Mammary epithelial cell (primary cell): ENCODE measurements at regions of chr16 and their contacts with region 1.

Region 1: GRCh38 chr16:24681809-24682511 is 47.5 kb upstream of the TNRC6A start:
- DNase-seq: peak; percentile 83
- H3K4me3 ChIP-seq: no peak overlapping the region
- H3K27ac ChIP-seq: peak overlapping the region; percentile 98
- H3K4me1 ChIP-seq: peaks cover 26% of the 10 kb centered on the region
- H3K27me3 ChIP-seq: no peaks in the 10 kb centered on the region
- CTCF ChIP-seq: no peak

Region 2: GRCh38 chr16:24645739-24646645 is 36.0 kb before region 1 on chr16:
- CTCF ChIA-PET with region 1: no interaction called
- dilution Hi-C with region 1: no loop called
- in situ Hi-C with region 1: no loop called
- intact Hi-C with region 1: loop called (anchors 1 kb)
- DNase-seq: peak; percentile 98
- H3K4me3 ChIP-seq: no peak overlapping the region
- H3K27ac ChIP-seq: peak overlapping the region; percentile 91
- H3K4me1 ChIP-seq: peaks cover 17% of the 10 kb centered on the region
- H3K27me3 ChIP-seq: no peaks in the 10 kb centered on the region
- CTCF ChIP-seq: no peak

Region 3: GRCh38 chr16:24700549-24701392 is 18.8 kb after region 1 on chr16:
- CTCF ChIA-PET with region 1: interaction called, 13 read pairs
- dilution Hi-C with region 1: no loop called
- in situ Hi-C with region 1: no loop called
- intact Hi-C with region 1: no loop called
- DNase-seq: peak; percentile 85
- H3K4me3 ChIP-seq: no peak overlapping the region
- H3K27ac ChIP-seq: peak overlapping the region; percentile 14
- H3K4me1 ChIP-seq: peaks cover 16% of the 10 kb centered on the region
- H3K27me3 ChIP-seq: no peaks in the 10 kb centered on the region
- CTCF ChIP-seq: peak; percentile 22 to 50

Region 4: DNA sequence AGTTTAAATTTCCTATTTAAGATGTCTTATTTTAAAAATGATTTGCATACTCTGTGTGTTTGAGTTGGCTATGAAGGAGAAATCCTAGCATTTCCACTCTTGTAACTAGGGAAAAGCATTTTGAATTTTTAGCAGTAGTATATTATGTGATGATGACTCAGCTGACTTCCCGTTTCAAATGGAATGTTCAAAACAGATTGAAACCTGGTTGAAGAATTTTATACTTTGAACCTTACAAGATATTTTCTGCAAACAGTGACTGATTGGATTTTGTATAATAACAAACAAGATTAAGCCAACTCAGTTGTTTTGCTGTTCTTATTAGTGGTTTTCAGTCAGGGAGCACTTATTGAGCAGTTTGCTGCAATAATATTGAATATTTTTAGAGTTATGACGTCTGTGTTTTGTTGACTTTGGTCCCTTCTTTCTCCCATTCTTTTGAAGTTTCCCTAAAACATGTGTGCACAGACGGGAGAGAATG is 55.5 kb after region 1 on chr16:
- CTCF ChIA-PET with region 1: no interaction called
- dilution Hi-C with region 1: no loop called
- in situ Hi-C with region 1: no loop called
- intact Hi-C with region 1: no loop called
- DNase-seq: no peak
- H3K4me3 ChIP-seq: peak overlapping the region in 1 of 3 experiments; percentile 23
- H3K27ac ChIP-seq: peak overlapping the region; percentile 38
- H3K4me1 ChIP-seq: peaks cover 27% of the 10 kb centered on the region
- H3K27me3 ChIP-seq: no peaks in the 10 kb centered on the region
- CTCF ChIP-seq: no peak

Region 5: DNA sequence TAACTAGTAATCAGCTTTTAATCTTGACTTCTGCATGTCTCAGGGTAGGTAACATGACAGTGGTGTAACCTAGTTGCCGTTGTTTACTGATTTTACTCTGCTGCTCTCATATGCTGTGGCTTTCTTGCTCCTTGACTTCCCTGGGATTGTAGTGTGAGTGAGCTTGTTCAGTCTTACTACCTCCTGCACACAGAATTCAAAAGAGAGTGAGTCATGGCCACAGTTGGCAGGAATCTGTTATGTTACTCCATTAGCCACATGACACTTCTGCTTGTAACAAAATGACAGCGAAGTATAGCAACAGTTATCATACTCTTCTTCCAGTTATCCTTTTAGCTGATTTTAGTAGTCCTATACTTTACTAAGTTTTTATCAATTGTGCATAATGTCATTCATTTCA is 66.3 kb after region 1 on chr16:
- CTCF ChIA-PET with region 1: no interaction called
- dilution Hi-C with region 1: loop called (anchors 5 kb)
- in situ Hi-C with region 1: no loop called
- intact Hi-C with region 1: no loop called
- DNase-seq: peak; percentile 88
- H3K4me3 ChIP-seq: no peak overlapping the region
- H3K27ac ChIP-seq: no peak overlapping the region
- H3K4me1 ChIP-seq: peaks cover 23% of the 10 kb centered on the region
- H3K27me3 ChIP-seq: no peaks in the 10 kb centered on the region
- CTCF ChIP-seq: no peak

Region 6: DNA sequence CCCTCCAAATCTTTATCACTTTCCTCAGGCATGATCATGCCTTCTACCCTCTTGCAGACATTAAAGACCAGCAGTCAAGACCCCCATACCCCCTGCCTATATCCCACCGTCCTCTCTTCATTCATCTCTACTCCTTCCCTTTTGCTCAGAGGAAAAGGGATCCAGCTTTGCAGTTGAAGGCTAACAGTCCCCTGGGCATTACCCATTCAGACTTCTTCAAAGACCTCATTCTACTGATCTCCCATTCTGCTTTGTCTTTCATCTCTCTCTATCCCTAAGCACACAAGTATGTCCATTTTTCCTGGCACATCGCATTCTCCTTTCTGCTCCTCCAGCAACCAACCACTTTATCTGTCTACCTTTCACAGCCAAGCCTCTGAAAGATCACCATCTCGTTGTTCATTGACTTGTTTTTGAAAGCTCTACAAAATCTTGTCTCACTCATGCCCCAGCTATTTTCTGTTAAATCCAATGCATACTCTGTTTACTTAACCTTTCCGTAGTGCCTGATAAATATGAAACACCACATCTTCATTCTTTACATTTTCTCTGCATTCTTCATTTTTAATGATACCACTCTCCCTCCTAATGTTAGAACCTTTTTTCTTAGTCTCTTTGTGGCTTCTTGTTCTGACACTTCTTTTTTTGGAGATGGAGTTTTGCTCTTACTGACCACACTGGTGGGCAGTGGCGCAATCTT is 415.5 kb after region 1 on chr16:
- CTCF ChIA-PET with region 1: no interaction called
- dilution Hi-C with region 1: no loop called
- in situ Hi-C with region 1: no loop called
- intact Hi-C with region 1: no loop called
- DNase-seq: no peak
- H3K4me3 ChIP-seq: no peak overlapping the region
- H3K27ac ChIP-seq: no peak overlapping the region
- H3K4me1 ChIP-seq: no peaks in the 10 kb centered on the region
- H3K27me3 ChIP-seq: peaks cover 7% of the 10 kb centered on the region
- CTCF ChIP-seq: no peak